CD8-positive, alpha-beta T cell (primary cell): ENCODE measurements at regions of chr3 and their contacts with region 1.

Region 1: DNA sequence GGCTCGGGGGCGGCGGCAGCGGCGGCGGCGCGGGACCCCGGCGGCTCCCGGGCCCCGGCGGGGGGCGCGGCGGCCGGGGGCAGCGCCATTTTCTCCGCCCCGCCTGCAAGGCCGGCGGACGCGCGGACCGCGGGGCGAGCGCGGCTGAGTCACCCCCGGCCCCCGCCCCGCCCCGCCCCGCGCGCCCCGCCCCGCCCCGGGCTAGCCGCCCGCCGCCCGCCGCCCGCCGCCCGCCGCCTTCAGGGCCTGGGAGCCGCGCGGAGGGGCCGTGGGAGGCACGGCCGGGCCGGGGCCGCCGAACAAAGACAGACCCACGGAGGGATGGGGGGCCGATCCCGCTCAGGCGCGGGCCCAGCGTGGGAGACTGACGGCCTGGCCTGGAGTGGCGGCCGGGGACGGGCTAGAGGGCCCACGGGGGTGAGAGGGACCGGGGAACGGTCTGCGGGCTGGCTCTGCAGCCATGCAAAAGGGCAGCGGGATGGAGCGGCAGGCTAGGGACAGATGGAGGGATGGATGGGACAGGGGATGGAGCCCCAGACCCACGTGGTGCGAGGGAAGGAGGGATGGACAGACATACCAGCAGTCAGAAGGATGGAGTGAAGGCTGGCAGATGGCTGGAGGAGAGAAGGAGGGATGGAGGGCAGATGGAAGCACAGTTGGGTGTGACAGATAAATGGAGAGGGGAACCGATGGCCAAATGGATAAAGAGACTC is at the start of gene EIF4E3:
- DNase-seq: peak in 8 of 9 experiments; percentile 26 to 79 (median 42)
- ATAC-seq: peak; percentile 28
- H3K4me3 ChIP-seq: peak within 1 kb of the TSS; percentile 74 to 89
- H3K4me3 Mint-ChIP-seq: peak within 1 kb of the TSS; percentile 92
- H3K27ac ChIP-seq: peak within 1 kb of the TSS; percentile 54 to 80
- H3K27ac Mint-ChIP-seq: peak within 1 kb of the TSS; percentile 97
- H3K4me1 ChIP-seq: peaks cover 59% of the 10 kb centered on the region
- H3K4me1 Mint-ChIP-seq: peaks cover 73% of the 10 kb centered on the region
- H3K27me3 ChIP-seq: no peaks in the 10 kb centered on the region
- H3K27me3 Mint-ChIP-seq: no peaks in the 10 kb centered on the region
- CTCF ChIP-seq: no peak
- total RNA-seq, gene EIF4E3: 33.0 to 34.5 TPM

Region 2: GRCh38 chr3:71456156-71456555 is 269.3 kb before region 1 on chr3:
- CTCF ChIA-PET with region 1: no interaction called
- POLR2A ChIA-PET with region 1: no interaction called
- intact Hi-C with region 1: loop called in 1 of 2 experiments (anchors 10 kb)
- DNase-seq: peak in 2 of 9 experiments; percentile 46 to 70
- ATAC-seq: peak; percentile 39
- H3K4me3 ChIP-seq: peak overlapping the region; percentile 22 to 32
- H3K4me3 Mint-ChIP-seq: peak overlapping the region; percentile 81
- H3K27ac ChIP-seq: peak overlapping the region; percentile 57 to 78
- H3K27ac Mint-ChIP-seq: peak overlapping the region; percentile 99
- H3K4me1 ChIP-seq: peaks cover 85% of the 10 kb centered on the region
- H3K4me1 Mint-ChIP-seq: peaks cover 95% of the 10 kb centered on the region
- H3K27me3 ChIP-seq: no peaks in the 10 kb centered on the region
- H3K27me3 Mint-ChIP-seq: no peaks in the 10 kb centered on the region
- CTCF ChIP-seq: peak; percentile 50

Region 3: GRCh38 chr3:71744738-71745137 is 19.3 kb after region 1 on chr3:
- CTCF ChIA-PET with region 1: interaction called, 16 read pairs
- POLR2A ChIA-PET with region 1: interaction called, 3 read pairs
- intact Hi-C with region 1: no loop called
- DNase-seq: no peak
- ATAC-seq: no peak
- H3K4me3 ChIP-seq: no peak overlapping the region
- H3K4me3 Mint-ChIP-seq: no peak overlapping the region
- H3K27ac ChIP-seq: no peak overlapping the region
- H3K27ac Mint-ChIP-seq: no peak overlapping the region
- H3K4me1 ChIP-seq: no peaks in the 10 kb centered on the region
- H3K4me1 Mint-ChIP-seq: no peaks in the 10 kb centered on the region
- H3K27me3 ChIP-seq: peaks cover 0 to 4% of the 10 kb centered on the region in 2 experiments
- H3K27me3 Mint-ChIP-seq: no peaks in the 10 kb centered on the region
- CTCF ChIP-seq: no peak

Region 4: GRCh38 chr3:71805199-71805598 is 79.8 kb after region 1 on chr3:
- CTCF ChIA-PET with region 1: no interaction called
- POLR2A ChIA-PET with region 1: no interaction called
- intact Hi-C with region 1: no loop called
- DNase-seq: no peak
- ATAC-seq: no peak
- H3K4me3 ChIP-seq: no peak overlapping the region
- H3K4me3 Mint-ChIP-seq: no peak overlapping the region
- H3K27ac ChIP-seq: no peak overlapping the region
- H3K27ac Mint-ChIP-seq: no peak overlapping the region
- H3K4me1 ChIP-seq: no peaks in the 10 kb centered on the region
- H3K4me1 Mint-ChIP-seq: no peaks in the 10 kb centered on the region
- H3K27me3 ChIP-seq: no peaks in the 10 kb centered on the region
- H3K27me3 Mint-ChIP-seq: peaks cover 10% of the 10 kb centered on the region
- CTCF ChIP-seq: no peak

Region 5: GRCh38 chr3:71885006-71885405 is 159.6 kb after region 1 on chr3:
- CTCF ChIA-PET with region 1: no interaction called
- POLR2A ChIA-PET with region 1: no interaction called
- intact Hi-C with region 1: no loop called
- DNase-seq: no peak
- ATAC-seq: no peak
- H3K4me3 ChIP-seq: no peak overlapping the region
- H3K4me3 Mint-ChIP-seq: no peak overlapping the region
- H3K27ac ChIP-seq: no peak overlapping the region
- H3K27ac Mint-ChIP-seq: no peak overlapping the region
- H3K4me1 ChIP-seq: no peaks in the 10 kb centered on the region
- H3K4me1 Mint-ChIP-seq: no peaks in the 10 kb centered on the region
- H3K27me3 ChIP-seq: no peaks in the 10 kb centered on the region
- H3K27me3 Mint-ChIP-seq: peaks cover 17% of the 10 kb centered on the region
- CTCF ChIP-seq: no peak

Region 6: DNA sequence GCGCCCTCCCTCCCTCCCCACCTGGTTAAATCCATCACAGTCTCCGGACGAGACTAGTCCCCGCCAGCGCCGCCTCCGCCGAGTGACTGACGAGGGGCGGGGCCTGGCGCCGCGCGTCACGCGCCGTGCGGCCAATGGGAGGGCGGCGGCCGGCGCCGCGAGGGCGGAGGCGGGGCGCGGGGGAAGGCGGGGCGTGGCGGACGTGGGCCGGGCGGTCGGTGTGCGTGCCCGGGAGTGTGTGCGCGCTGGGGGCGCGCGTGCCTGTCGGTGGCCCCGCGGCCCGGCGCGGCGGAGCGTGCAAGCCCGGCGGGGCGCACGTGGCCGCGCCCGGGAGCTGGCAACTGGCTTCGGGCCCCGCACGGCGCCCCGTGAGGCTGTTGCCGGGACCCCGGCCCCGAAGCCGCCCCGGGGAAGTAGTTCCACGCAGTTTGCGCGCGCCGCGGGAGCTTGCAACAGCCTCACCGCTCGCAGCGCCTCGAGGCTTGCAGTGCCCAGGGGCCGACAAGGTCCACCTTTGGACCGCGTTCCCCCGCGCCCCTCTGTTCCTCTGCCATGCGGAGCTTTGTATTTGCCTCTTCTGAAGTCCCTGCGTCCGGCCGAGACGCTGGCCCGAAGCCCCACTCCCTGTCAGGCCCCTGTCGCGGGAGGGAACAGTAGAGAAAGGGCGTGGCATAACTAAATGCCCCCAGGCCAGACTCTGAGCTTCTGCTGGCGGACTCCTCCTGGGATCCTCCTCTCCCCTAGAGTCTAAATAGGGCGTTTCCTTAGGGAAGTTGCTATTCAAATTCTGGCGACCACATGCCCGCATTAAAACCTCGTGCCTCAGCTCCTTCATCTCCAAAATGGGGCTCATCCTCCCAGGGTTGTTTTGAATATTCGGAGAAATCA is 721.9 kb after region 1 on chr3:
- CTCF ChIA-PET with region 1: no interaction called
- POLR2A ChIA-PET with region 1: no interaction called
- intact Hi-C with region 1: loop called in 1 of 2 experiments (anchors 2 kb)
- DNase-seq: peak; percentile 88 to 98 (median 94)
- ATAC-seq: peak; percentile 95
- H3K4me3 ChIP-seq: peak overlapping the region; percentile 45 to 66
- H3K4me3 Mint-ChIP-seq: peak overlapping the region; percentile 100
- H3K27ac ChIP-seq: no peak overlapping the region
- H3K27ac Mint-ChIP-seq: peak overlapping the region; percentile 73
- H3K4me1 ChIP-seq: peaks cover 29% of the 10 kb centered on the region
- H3K4me1 Mint-ChIP-seq: peaks cover 41% of the 10 kb centered on the region
- H3K27me3 ChIP-seq: no peaks in the 10 kb centered on the region
- H3K27me3 Mint-ChIP-seq: peaks cover 9% of the 10 kb centered on the region
- CTCF ChIP-seq: no peak

Region 7: GRCh38 chr3:72818092-72818773 is 1092.8 kb after region 1 on chr3:
- CTCF ChIA-PET with region 1: interaction called, 4 read pairs
- POLR2A ChIA-PET with region 1: no interaction called
- intact Hi-C with region 1: loop called (anchors 1 to 5 kb)
- DNase-seq: peak in 2 of 9 experiments; percentile 6 to 22
- ATAC-seq: no peak
- H3K4me3 ChIP-seq: no peak overlapping the region
- H3K4me3 Mint-ChIP-seq: no peak overlapping the region
- H3K27ac ChIP-seq: no peak overlapping the region
- H3K27ac Mint-ChIP-seq: no peak overlapping the region
- H3K4me1 ChIP-seq: peaks cover 26% of the 10 kb centered on the region
- H3K4me1 Mint-ChIP-seq: peaks cover 8% of the 10 kb centered on the region
- H3K27me3 ChIP-seq: no peaks in the 10 kb centered on the region
- H3K27me3 Mint-ChIP-seq: no peaks in the 10 kb centered on the region
- CTCF ChIP-seq: no peak